Right cardiac atrium (tissue), 5 donors: ENCODE measurements at regions of chr20 and their contacts with region 1.

Region 1: DNA sequence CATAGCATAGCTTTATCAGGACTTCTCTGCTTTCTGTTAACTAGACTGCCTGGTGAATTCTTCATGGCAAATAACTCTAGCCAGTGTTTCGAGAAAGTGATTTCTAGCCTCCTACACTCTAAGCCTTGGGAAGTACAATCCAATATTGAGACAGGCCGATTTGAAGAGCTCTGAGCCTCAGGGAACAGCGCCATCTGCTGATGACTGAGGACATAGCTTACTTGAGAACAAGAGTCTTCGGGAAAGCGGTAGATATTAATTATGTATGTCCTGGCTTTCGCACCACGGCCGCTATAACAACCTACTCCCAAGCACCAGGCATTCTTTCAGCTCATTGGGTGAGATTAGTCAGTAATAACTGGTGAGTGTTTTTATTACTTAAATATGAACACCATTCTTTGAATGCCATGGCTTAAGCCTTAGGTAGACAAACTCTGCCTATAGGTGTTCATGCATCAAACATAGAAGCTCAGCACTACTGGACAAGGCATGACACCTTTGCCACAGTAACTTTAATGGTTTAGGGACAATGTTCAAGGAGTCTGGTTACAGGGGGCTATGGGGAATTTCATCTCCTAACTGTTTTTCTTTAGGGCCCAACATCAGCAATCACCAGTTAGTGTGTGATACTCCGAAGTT is 518.6 kb downstream of the BMP2 start:
- DNase-seq: peak; percentile 74 to 84 (median 76)
- ATAC-seq: peak; percentile 80 to 84
- H3K4me3 ChIP-seq: no peak overlapping the region
- H3K27ac ChIP-seq: no peak overlapping the region
- H3K4me1 ChIP-seq: no peaks in the 10 kb centered on the region
- H3K27me3 ChIP-seq: no peaks in the 10 kb centered on the region

Region 2: DNA sequence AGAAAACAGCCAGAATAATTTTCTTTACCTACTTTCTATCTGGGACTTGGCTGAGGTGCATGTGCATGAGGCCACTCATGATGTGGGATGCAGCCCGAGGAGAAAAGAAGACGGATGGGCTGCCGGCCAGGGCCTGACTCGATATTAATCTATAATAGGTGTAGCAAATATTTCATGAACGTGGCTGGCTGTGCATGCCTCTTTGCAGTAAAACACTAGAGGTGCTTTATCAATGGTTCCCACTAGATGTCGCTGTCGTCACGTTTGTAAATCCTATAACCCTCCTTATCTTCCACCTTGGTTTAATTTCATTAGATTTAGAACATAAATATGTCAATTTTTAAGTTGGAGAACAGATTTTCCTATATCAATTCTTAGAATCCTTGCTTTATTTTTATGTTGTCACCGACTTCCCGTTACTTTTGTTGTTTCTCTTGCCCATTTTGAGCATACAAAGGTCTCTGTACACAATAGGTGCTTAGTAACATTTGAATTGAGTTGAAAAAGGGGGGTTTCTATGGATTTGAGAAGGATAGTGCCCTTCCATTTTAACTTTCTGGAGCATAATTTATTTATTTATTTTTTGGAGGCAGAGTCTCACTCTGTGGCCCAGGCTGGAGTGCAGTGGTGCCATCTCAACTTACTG is 1143.6 kb before region 1 on chr20:
- intact Hi-C with region 1: loop called in 1 of 4 experiments (anchors 10 kb)
- DNase-seq: peak in 1 of 3 donors; percentile 19
- ATAC-seq: peak in 1 of 2 donors; percentile 57
- H3K4me3 ChIP-seq: no peak overlapping the region
- H3K27ac ChIP-seq: no peak overlapping the region
- H3K4me1 ChIP-seq: no peaks in the 10 kb centered on the region
- H3K27me3 ChIP-seq: no peaks in the 10 kb centered on the region

Region 3: GRCh38 chr20:6178537-6178936 is 1107.5 kb before region 1 on chr20:
- intact Hi-C with region 1: loop called in 1 of 4 experiments (anchors 10 kb)
- DNase-seq: no peak
- ATAC-seq: peak in 1 of 2 donors; percentile 48
- H3K4me3 ChIP-seq: no peak overlapping the region
- H3K27ac ChIP-seq: no peak overlapping the region
- H3K4me1 ChIP-seq: no peaks in the 10 kb centered on the region
- H3K27me3 ChIP-seq: no peaks in the 10 kb centered on the region

Region 4: DNA sequence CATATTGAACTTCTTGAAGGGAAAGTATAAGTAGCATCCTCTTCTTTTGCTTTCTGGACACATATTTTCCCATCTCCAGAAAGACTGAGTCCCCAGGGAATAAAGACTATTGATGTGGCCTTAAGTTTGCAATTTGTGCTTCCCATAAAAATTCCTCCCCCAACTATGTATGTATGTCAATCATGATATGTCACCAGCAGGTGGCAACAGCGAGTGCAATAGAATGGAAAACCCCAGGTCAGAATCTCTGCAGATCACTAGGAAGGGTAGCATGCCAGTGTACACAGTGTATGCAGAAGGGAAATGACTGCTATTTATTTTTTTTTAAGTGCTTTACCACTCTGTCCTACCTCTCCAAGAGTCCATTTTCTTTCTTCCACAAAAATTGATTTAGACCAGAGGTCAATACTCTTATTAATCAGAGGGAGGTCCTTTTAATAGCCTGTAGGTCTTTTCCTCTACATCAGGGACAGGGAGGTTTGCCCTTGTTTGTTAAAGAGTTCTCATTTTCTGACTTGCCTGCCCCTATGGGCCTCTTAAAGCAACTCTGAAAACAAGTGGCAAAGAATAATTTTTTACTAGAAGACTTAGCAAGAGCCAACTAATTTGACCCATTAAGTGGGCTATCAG is 457.1 kb before region 1 on chr20:
- intact Hi-C with region 1: loop called in 1 of 4 experiments (anchors 5 kb)
- DNase-seq: peak; percentile 53 to 68 (median 58)
- ATAC-seq: peak; percentile 87 to 91
- H3K4me3 ChIP-seq: no peak overlapping the region
- H3K27ac ChIP-seq: no peak overlapping the region
- H3K4me1 ChIP-seq: no peaks in the 10 kb centered on the region
- H3K27me3 ChIP-seq: no peaks in the 10 kb centered on the region

Region 5: DNA sequence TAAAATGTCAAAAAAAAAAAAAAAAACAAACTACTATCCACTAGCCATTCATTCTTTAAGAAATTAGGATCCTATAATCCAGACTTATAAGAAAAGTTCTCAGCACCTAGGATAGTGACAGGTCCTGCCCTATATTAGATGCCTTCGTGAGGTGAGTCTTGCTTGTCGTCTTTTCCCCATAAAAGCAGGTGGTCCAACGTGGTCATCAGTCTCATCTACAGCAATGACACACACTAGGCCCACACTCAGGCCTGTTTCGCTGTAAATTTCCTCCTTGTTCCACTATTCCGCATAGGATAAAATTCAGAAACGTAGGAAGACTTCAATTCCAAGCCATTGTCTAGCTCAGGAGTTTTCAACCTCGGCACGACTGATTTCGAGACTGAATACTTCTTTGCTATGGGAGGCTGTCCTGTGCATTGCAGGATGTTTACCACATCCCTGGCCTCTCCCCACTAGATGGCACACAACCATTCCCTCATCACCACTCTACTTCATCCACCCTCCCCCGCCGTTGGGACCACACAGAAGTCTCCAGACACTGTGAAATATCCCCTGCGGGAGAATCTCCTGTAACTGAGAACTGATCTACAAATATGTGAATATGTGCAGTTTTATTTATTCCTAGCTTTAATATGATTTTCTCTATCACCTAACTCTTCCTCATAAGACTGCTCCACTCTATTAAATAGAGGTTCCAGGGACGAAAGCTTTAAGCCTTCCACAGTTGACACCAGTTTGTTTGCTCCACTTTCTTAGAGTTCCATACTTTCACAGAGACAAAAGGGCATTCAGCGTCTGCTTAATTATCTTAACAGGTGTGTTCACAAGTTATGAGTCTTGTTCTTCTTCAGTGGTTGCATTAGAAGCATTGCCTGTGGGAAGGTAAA is 172.2 kb before region 1 on chr20:
- intact Hi-C with region 1: loop called in 3 of 4 experiments (anchors 5 to 10 kb)
- DNase-seq: peak; percentile 25 to 58 (median 53)
- ATAC-seq: peak; percentile 75 to 76
- H3K4me3 ChIP-seq: no peak overlapping the region
- H3K27ac ChIP-seq: no peak overlapping the region
- H3K4me1 ChIP-seq: no peaks in the 10 kb centered on the region
- H3K27me3 ChIP-seq: no peaks in the 10 kb centered on the region

Region 6: GRCh38 chr20:7627734-7628663 is 342.0 kb after region 1 on chr20:
- intact Hi-C with region 1: no loop called
- DNase-seq: no peak
- ATAC-seq: no peak
- H3K4me3 ChIP-seq: no peak overlapping the region
- H3K27ac ChIP-seq: no peak overlapping the region
- H3K4me1 ChIP-seq: no peaks in the 10 kb centered on the region
- H3K27me3 ChIP-seq: no peaks in the 10 kb centered on the region